Pancreas (tissue), 10 donors: ENCODE measurements at regions of chr1 and their contacts with region 1.

Region 1: DNA sequence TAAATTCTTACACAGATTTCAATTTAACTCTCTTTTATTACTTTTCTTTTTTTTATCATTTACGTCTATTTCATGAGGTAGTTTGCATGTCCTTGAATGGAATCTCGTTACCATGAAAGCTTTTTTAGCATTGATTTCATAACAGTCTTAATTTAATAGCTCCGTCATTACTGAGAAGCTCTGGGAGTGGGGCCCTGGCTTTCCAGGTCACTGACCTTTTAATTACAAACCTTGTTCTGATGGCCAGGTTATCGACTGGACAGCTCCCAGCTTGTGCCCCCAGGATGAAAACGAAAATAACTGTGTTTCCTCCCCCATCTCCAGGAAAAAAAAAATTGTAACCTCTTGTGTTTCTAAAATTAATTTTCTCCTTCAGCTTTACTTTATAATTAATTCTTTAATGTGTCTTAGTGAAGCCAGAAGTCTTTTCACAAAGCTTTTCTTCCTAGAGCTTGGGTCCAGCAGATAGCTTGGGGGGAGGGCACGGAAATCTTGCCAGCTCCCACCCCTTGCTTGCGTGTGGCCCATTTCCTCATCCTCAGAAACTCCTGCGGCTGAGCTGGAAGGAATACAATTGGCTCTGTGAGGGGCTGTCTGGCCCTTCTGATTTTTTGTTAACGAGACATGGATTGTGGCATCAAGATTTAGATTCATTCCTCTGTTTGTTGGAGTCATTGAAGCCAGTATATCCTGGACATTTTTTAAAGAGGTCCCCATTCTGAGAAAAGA is 65.7 kb downstream of the PEX14 start:
- DNase-seq: no peak
- ATAC-seq: no peak
- H3K4me3 ChIP-seq: no peak overlapping the region
- H3K27ac ChIP-seq: no peak overlapping the region
- H3K4me1 ChIP-seq: no peaks in the 10 kb centered on the region
- H3K27me3 ChIP-seq: no peaks in the 10 kb centered on the region
- CTCF ChIP-seq: no peak

Region 2: GRCh38 chr1:10612436-10613160 is 72.2 kb after region 1 on chr1:
- intact Hi-C with region 1: loop called in 1 of 3 experiments (anchors 10 kb)
- DNase-seq: no peak
- ATAC-seq: no peak
- H3K4me3 ChIP-seq: no peak overlapping the region
- H3K27ac ChIP-seq: no peak overlapping the region
- H3K4me1 ChIP-seq: no peaks in the 10 kb centered on the region
- H3K27me3 ChIP-seq: no peaks in the 10 kb centered on the region
- CTCF ChIP-seq: no peak

Region 3: DNA sequence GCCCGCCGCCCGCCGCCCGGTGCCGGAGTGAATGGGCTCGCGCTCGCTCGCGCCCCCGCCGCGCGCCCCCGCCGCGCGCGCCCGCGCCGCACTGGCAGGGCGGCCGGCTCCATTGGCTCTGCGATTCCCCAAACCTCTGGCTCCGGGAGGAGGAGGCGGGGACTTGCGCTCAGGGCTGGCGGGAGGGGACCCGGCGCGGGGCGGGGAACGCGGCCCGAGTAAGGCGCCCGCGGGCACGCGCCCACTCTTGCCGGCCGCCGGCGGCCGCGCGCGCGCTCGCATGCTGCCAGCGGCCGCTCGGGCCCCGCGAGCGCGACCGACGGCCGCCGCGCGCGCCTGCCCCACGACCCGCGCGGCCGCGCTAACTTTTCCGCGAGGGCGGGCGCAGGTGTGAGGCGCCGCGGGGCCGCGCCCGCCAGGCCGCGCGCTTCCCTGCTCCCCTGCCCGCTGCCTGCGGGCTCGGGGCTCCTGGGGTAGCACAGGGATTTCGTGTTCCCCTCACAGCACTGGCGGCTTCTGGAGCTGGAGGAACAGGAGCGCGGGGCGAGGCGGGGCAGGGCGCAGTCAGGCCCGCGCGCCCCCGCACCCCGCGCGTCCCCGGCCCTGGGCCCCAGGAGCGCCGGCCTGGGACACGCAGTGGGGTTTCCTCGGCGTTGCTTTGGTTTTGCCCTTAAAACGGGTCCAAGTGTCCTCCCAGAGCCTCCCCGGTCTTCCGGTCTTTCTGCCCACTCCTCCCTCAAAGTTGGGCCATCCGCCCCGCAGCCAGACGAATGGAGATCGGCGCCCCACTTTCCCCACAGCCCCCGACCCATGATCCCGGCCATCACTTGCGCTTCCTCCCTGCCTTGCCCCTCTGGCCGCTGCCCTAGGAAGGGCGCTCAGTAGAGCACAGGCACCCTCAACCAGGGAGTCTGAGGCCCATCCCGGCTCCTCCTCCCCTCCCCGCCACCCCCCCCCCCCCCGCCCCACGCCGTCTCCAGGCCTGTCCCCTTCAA is 154.5 kb after region 1 on chr1:
- intact Hi-C with region 1: no loop called
- DNase-seq: peak; percentile 89 to 95 (median 90)
- ATAC-seq: peak; percentile 71 to 86 (median 78)
- H3K4me3 ChIP-seq: peak overlapping the region in 3 of 4 donors; percentile 39 to 73 (median 58)
- H3K27ac ChIP-seq: peak overlapping the region; percentile 67 to 85 (median 78)
- H3K4me1 ChIP-seq: peaks cover 10 to 23% (median 15%) of the 10 kb centered on the region in 3 donors
- H3K27me3 ChIP-seq: no peaks in the 10 kb centered on the region
- CTCF ChIP-seq: no peak